Pancreas (tissue), 10 donors: ENCODE measurements at regions of chr1 and their contacts with region 1.

Region 1: DNA sequence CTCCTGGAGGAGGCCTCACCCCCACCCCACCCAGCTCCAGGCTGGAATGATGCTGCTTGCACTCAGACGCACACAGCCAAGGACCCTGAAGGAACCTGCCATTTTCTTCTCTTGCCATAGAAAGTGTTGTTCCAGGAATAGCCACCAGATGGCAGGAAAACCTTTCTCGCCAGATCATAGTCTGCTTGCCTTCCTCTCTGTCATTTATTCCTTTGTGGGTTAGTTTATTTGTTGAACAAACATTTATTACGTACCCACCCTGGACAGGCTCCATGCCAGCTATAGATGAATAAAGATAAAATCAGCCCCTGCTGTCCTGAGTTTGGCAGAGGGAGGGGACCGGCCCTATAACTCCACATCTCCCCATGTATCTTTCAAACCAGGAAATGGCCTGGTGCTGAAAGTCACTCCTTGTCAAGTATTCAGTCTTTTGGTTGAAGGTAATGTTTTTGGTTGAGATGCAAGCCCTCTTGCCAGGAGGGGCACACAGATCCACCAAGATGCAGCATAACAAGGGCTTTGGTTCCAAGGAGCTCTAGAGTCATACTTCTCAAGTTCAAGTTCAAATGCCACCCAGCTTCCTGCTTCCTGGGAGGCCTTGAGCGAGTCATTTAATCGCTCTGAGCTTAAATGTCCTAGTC is 7.0 kb upstream of the KCNC4 start:
- DNase-seq: peak in 4 of 6 donors; percentile 21 to 75 (median 41)
- ATAC-seq: peak; percentile 65 to 83 (median 72)
- H3K4me3 ChIP-seq: no peak overlapping the region
- H3K27ac ChIP-seq: peak overlapping the region in 3 of 4 donors; percentile 31 to 53 (median 40)
- H3K4me1 ChIP-seq: peaks cover 3 to 8% (median 5%) of the 10 kb centered on the region in 3 donors
- H3K27me3 ChIP-seq: no peaks in the 10 kb centered on the region
- CTCF ChIP-seq: peak; percentile 70 to 84 (median 79)

Region 2: GRCh38 chr1:110338309-110338885 is 135.3 kb after region 1 on chr1:
- intact Hi-C with region 1: no loop called
- DNase-seq: peak; percentile 88 to 96 (median 93)
- ATAC-seq: peak; percentile 81 to 90 (median 84)
- H3K4me3 ChIP-seq: peak overlapping the region; percentile 41 to 92 (median 50)
- H3K27ac ChIP-seq: peak overlapping the region; percentile 94 to 99 (median 98)
- H3K4me1 ChIP-seq: peaks cover 12 to 41% (median 26%) of the 10 kb centered on the region in 3 donors
- H3K27me3 ChIP-seq: no peaks in the 10 kb centered on the region
- CTCF ChIP-seq: peak; percentile 26 to 54 (median 31)

Region 3: GRCh38 chr1:110455151-110455550 is 252.0 kb after region 1 on chr1:
- intact Hi-C with region 1: loop called (anchors 5 to 10 kb)
- DNase-seq: no peak
- ATAC-seq: no peak
- H3K4me3 ChIP-seq: no peak overlapping the region
- H3K27ac ChIP-seq: no peak overlapping the region
- H3K4me1 ChIP-seq: no peaks in the 10 kb centered on the region
- H3K27me3 ChIP-seq: no peaks in the 10 kb centered on the region
- CTCF ChIP-seq: no peak

Region 4: GRCh38 chr1:110460253-110461220 is 257.4 kb after region 1 on chr1:
- intact Hi-C with region 1: loop called (anchors 5 to 10 kb)
- DNase-seq: peak in 5 of 6 donors; percentile 59 to 88 (median 77)
- ATAC-seq: peak; percentile 61 to 89 (median 87)
- H3K4me3 ChIP-seq: no peak overlapping the region
- H3K27ac ChIP-seq: no peak overlapping the region
- H3K4me1 ChIP-seq: peaks cover 15 to 18% (median 18%) of the 10 kb centered on the region in 3 donors
- H3K27me3 ChIP-seq: no peaks in the 10 kb centered on the region
- CTCF ChIP-seq: peak; percentile 90 to 94 (median 92)